Activated CD8-positive, alpha-beta T cell treated with anti-CD3 and anti-CD28 coated beads, Interleukin-2, amount 10 ng/mL, durations not matched to agents 7 days and 5 days (primary cell): ENCODE measurements at regions of chr5 and their contacts with region 1.

Region 1: DNA sequence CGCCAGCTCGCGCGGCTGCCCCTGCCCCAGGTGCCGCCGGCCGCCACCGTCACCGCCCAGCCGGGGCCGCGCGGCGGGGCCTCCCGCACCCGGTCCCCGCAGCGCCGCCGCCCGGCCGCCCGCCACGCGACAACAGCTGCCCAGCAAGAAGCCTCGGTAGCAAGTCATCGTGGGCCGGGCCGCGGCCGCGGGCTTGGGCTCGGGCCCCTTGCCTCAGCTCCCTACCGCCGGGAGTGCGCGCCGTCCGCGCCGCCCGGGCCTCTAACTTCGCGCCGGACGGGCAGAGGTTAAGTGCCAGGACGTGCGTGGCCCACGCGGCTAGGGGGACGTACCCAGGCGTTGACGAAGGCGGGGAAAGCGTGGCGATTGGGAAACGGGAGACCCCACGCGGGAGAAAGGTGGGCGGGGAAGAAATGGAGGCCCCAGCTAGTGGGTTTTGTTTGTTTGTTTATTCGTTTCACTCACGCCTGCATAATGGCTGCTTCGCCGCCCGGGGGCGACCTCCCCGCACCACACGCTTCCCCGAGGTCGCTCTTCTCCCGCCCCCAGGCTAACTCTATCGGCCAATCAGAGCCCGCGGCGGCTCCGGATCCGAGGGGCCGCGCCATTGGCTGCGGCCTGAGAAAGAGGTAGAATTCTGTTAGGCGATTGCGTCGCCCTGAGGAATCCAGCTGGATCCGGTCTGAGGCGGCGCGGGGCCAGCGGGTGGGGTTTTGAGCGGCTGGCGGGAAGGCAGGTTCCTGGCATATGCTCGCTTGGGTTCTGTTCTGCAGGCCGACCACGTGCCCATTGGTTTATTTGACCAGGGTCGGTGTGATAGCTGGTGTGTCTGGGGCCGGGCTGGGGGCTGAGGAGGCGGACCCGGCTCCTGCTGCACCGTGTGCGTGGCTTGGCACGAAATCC is at the start of gene NADK2:
- DNase-seq: peak; percentile 93
- ATAC-seq: peak; percentile 90
- H3K4me3 Mint-ChIP-seq: peak within 1 kb of the TSS; percentile 76
- H3K27ac Mint-ChIP-seq: peak within 1 kb of the TSS; percentile 84
- H3K4me1 Mint-ChIP-seq: peaks cover 29% of the 10 kb centered on the region
- H3K27me3 Mint-ChIP-seq: no peaks in the 10 kb centered on the region
- total RNA-seq, gene NADK2: 11.0 to 12.8 TPM

Region 2: DNA sequence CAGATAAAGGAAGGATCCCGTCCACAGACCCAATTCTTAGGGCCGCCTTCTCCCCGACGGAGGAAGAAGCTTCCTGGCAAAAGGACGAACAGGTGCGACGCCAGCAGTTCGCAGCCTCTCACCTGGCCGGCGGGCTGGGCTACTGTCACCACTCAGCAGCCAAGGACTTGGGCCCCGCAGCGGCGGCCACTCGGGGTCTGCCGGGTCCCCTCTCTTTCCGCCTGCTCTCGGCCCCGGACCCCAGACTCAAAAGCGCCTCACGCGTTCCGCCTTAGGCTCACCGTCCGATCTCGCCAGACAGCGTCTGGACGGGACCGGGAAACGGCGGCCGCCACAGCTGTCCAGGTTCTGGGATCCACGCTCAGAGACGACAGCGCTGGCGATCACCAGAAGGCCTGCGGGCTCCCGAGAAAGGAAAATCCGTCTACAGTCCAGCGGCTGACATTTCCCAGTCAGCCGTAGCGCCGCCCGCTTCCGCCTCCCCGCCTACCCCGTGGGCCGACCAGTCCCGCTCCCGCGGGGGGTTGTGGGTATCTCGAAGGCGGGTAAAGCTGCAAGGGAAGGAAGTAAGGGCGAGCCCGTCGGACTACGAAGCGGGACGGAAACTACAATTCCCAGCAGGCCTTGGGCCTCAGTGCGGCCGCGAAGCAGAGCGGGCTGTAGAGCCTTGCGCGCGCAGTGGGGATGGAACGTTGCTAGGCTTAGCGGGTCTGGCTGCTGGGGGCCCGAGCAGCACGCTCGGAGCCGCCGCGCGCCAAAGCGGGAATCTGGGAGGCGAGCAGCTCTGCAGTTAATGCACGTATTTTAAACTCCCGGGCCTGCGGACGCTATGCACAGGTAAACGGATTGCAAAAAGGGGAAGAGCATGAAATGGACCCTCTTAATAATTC is 90.2 kb before region 1 on chr5 and contains the starts of genes LMBRD2 and SKP2:
- CTCF ChIA-PET with region 1: interaction called, 18 read pairs
- POLR2A ChIA-PET with region 1: interaction called, 27 read pairs
- DNase-seq: peak; percentile 99
- ATAC-seq: peak; percentile 98
- H3K4me3 Mint-ChIP-seq: peak within 1 kb of the TSS; percentile 93
- H3K27ac Mint-ChIP-seq: peak within 1 kb of the TSS; percentile 83
- H3K4me1 Mint-ChIP-seq: peaks cover 54% of the 10 kb centered on the region
- H3K27me3 Mint-ChIP-seq: no peaks in the 10 kb centered on the region
- total RNA-seq, gene LMBRD2: 11.5 to 11.8 TPM
- total RNA-seq, gene SKP2: 54.6 to 61.4 TPM

Region 3: GRCh38 chr5:36217567-36217966 is 24.3 kb before region 1 on chr5:
- CTCF ChIA-PET with region 1: interaction called, 16 read pairs
- POLR2A ChIA-PET with region 1: interaction called, 3 read pairs
- DNase-seq: no peak
- ATAC-seq: no peak
- H3K4me3 Mint-ChIP-seq: no peak overlapping the region
- H3K27ac Mint-ChIP-seq: no peak overlapping the region
- H3K4me1 Mint-ChIP-seq: no peaks in the 10 kb centered on the region
- H3K27me3 Mint-ChIP-seq: no peaks in the 10 kb centered on the region

Region 4: GRCh38 chr5:36252722-36253365 is 11.0 kb after region 1 on chr5:
- CTCF ChIA-PET with region 1: interaction called, 18 read pairs
- POLR2A ChIA-PET with region 1: no interaction called
- DNase-seq: no peak
- ATAC-seq: no peak
- H3K4me3 Mint-ChIP-seq: no peak overlapping the region
- H3K27ac Mint-ChIP-seq: no peak overlapping the region
- H3K4me1 Mint-ChIP-seq: no peaks in the 10 kb centered on the region
- H3K27me3 Mint-ChIP-seq: peaks cover 22% of the 10 kb centered on the region

Region 5: DNA sequence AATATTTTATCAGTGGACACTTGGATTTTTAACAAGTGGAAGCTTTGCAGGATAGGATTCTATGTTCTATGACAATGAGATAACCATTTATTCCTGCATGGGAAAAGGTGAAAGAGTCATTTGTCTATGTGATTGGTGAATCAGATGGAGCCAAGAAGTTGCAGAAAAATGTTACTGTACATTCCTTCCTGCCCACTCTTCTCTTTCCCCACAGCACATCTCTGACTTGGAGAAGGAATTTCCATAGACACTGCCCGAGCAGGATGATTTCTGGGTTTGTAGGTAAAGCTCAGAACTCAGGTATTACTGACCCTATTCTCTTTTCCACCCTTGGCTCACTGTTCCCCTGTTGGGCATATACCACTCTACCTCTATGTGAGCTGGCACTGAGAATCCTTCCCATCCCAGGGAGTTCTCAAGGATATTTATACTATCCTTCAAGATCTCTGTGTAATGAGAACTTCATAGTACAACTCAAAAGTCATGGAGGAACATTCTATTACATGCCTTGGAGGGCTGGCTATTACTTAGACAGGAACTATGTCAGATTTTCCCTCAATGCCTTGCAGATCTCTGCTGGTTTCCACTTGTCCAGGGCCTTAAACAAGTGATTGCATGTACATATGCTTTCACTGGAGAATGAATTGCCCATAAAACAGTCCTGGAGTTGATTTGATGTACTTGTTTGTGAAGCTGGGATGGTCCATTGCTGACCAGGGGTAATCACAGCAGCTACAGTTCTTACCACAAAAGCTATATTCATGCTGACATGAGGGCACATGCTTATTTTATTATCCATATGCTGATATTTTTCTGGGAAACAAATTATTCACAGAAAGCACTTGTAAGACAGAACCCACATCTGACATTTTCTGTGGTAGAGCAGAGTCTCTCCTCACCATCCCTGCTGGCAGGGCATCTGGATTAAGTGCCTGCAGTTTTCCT is 388.6 kb after region 1 on chr5:
- CTCF ChIA-PET with region 1: no interaction called
- POLR2A ChIA-PET with region 1: no interaction called
- DNase-seq: no peak
- ATAC-seq: no peak
- H3K4me3 Mint-ChIP-seq: no peak overlapping the region
- H3K27ac Mint-ChIP-seq: no peak overlapping the region
- H3K4me1 Mint-ChIP-seq: no peaks in the 10 kb centered on the region
- H3K27me3 Mint-ChIP-seq: peaks cover 6% of the 10 kb centered on the region